Ovary (tissue), 10 donors: ENCODE measurements at regions of chr2 and their contacts with region 1.

Region 1: DNA sequence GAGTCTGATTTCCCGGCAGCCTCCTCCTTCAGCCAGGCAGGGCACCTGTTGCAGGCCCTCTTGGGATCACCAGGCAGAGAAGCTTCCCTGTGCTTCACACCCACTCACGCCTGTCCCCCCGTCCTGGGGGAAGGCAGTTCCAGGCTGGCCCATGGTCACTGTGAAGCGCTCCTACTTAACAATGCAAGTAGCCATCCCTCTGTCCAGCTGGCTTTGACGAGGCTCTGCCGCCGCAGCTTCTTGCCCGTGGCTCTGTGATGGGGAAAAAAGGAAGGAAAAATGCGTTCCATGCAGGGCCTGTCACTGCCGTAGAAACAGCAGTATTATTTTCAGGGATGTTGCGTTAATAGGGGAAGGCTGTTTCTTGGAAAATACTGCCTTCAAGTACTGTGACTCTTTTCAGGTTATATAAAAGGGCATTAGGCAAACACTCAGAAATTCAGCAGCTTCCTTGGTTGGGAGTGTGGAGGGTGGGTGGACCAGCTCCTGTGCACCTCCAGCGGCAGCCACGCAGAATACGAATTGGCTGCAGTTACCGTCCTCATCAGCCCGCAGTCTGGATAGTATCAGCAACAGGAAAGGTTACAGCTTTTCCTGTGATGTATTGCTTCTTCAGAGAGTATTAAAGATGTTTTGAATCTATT is 232.3 kb downstream of the KLHL29 start:
- DNase-seq: peak; percentile 74 to 81 (median 79)
- H3K4me3 ChIP-seq: peak overlapping the region; percentile 14
- H3K27ac ChIP-seq: peak overlapping the region; percentile 75 to 91
- H3K4me1 ChIP-seq: peaks cover 5% of the 10 kb centered on the region
- H3K27me3 ChIP-seq: no peaks in the 10 kb centered on the region
- CTCF ChIP-seq: peak; percentile 78 to 87 (median 78)
- EP300 ChIP-seq: no peak
- POLR2A ChIP-seq: no peak

Region 2: GRCh38 chr2:23574919-23575654 is 42.2 kb before region 1 on chr2:
- intact Hi-C with region 1: loop called in 1 of 4 experiments (anchors 5 kb)
- DNase-seq: no peak
- H3K4me3 ChIP-seq: no peak overlapping the region
- H3K27ac ChIP-seq: no peak overlapping the region
- H3K4me1 ChIP-seq: peaks cover 7% of the 10 kb centered on the region
- H3K27me3 ChIP-seq: no peaks in the 10 kb centered on the region
- CTCF ChIP-seq: no peak
- EP300 ChIP-seq: no peak
- POLR2A ChIP-seq: no peak